K562 (cell line): ENCODE measurements at regions of chr1 and their contacts with region 1.

Region 1: DNA sequence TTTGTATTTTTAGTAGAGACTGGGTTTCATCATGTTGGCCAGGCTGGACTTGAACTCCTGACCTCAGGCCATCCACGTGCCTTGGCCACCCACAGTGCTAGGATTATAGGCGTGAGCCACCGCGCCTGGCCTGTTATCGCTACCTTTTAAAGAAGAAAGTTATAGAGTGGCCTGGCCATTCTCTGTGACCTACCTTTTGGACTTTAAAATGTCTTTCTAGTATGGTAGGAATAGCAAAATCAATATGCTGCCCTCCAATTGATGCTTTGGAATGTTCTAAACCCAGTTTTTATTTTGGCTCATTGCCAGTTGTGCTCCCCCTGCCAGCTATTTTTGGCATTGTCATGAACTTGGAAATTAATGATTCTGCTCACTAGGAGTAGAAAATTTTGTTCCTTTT is 19.9 kb downstream of the HIPK1 start:
- DNase-seq: peak; percentile 63 to 78 (median 66)
- ATAC-seq: peak; percentile 65
- H3K4me3 ChIP-seq: no peak overlapping the region
- H3K27ac ChIP-seq: peak overlapping the region; percentile 44; the same call in 2 of the 3 replicates
- H3K4me1 ChIP-seq: peaks cover 11 to 27% of the 10 kb centered on the region in 2 experiments; a peak in 4 of 5 replicates
- H3K27me3 ChIP-seq: no peaks in the 10 kb centered on the region
- CTCF ChIP-seq: peak; percentile 57 to 72 (median 66); a peak in 5 of 6 replicates
- EP300 ChIP-seq: no peak
- POLR2A ChIP-seq: no peak
- RAD21 ChIP-seq: peak; percentile 36 to 75; a peak in 3 of 4 replicates

Region 2: DNA sequence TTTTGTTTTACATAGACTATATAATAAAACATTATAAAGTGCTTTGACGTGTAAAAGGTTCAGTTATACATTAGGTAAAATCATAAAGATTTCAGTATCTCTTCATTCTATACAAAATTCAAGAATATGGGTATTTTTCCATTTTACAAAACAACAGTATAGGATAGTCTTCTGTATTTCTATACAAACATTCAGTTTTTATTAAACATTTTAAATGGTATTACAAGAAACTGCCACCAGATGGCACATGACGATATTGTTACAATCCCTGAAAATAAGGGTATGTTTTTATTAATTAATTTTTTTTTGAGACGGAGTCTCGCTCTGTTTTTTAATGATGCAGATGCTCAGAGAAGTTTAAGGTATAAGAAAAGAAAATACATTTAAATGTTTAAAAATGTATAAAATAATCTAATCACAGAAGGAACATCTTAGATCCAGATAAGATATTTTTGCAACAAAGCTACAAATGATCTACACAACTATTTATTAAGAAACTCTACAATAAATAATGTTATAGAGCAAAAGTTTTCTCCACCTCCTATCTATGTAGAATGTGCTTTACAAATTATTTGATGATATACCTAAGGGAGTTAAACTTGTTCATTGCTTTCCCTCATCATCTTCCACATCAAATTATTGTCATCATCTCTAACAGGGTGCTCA is 113.2 kb before region 1 on chr1:
- CTCF ChIA-PET with region 1: interaction called, 5 read pairs
- POLR2A ChIA-PET with region 1: no interaction called
- in situ Hi-C with region 1: no loop called
- intact Hi-C with region 1: loop called (anchors 5 kb)
- DNase-seq: peak; percentile 33 to 71 (median 38)
- ATAC-seq: peak; percentile 70
- H3K4me3 ChIP-seq: no peak overlapping the region
- H3K27ac ChIP-seq: no peak overlapping the region
- H3K4me1 ChIP-seq: no peaks in the 10 kb centered on the region
- H3K27me3 ChIP-seq: no peaks in the 10 kb centered on the region
- CTCF ChIP-seq: peak in 2 of 3 experiments; percentile 52 to 83; a peak in 4 of 6 replicates
- EP300 ChIP-seq: no peak
- POLR2A ChIP-seq: no peak
- RAD21 ChIP-seq: peak; percentile 88 to 89

Region 3: DNA sequence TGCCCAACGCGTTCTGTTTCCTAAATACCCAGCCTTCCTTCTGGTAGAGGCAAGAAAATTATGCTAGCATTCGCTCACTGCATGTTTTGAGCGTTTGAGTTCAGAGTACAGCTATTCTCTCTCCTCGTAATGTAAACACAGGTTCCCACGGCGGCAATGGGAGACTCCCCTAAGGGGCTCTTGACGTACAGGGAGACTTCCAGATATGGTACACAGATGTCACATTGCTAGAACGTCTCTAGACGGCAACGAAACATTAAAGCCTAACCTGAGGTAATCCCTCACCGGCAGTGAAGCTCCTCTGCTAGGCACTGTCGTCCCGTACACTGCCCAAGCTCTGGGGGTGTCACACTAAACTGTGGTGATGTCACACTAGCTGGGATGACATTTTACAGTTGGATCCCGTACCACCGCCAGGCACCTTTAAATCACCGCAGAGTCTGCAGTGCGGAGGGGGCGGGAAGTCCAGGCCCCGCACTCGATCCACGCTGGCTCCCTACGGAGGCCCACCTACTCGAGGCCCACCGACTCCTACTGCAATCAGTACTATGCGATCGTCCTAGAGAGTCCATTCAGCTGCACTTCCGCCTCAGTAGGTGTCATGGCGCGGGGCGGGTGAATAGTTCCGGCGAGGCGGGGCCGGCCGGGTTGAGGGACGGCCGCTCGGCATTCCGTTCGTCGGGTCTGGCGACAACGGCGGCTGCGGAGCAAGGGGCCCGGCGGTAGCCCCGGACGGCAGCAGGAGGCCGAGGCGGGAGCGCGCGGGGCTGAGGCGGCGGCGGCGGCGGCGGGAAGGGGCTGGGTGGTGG is 19.9 kb before region 1 on chr1 and contains the start of gene HIPK1:
- CTCF ChIA-PET with region 1: no interaction called
- POLR2A ChIA-PET with region 1: interaction called, 65 read pairs
- in situ Hi-C with region 1: no loop called
- intact Hi-C with region 1: loop called (anchors 1 kb)
- DNase-seq: peak; percentile 92 to 97 (median 93)
- ATAC-seq: peak; percentile 76
- H3K4me3 ChIP-seq: peak within 1 kb of the TSS; percentile 70
- H3K27ac ChIP-seq: peak within 1 kb of the TSS; percentile 96
- H3K4me1 ChIP-seq: peaks cover 15 to 34% of the 10 kb centered on the region in 2 experiments
- H3K27me3 ChIP-seq: no peaks in the 10 kb centered on the region
- CTCF ChIP-seq: no peak
- EP300 ChIP-seq: no peak; the same call in 1 of the 2 replicates
- POLR2A ChIP-seq: peak; percentile 85
- RAD21 ChIP-seq: peak; percentile 3 to 10; a peak in 1 of 4 replicates
- polyA plus RNA-seq, gene HIPK1: 10.0 to 10.9 TPM

Region 4: GRCh38 chr1:113934511-113935055 is 14.4 kb before region 1 on chr1:
- CTCF ChIA-PET with region 1: no interaction called
- POLR2A ChIA-PET with region 1: interaction called, 65 read pairs
- in situ Hi-C with region 1: no loop called
- intact Hi-C with region 1: loop called (anchors 1 kb)
- DNase-seq: no peak
- ATAC-seq: no peak
- H3K4me3 ChIP-seq: no peak overlapping the region
- H3K27ac ChIP-seq: no peak overlapping the region
- H3K4me1 ChIP-seq: peaks cover 25 to 38% of the 10 kb centered on the region in 2 experiments
- H3K27me3 ChIP-seq: no peaks in the 10 kb centered on the region
- CTCF ChIP-seq: no peak
- EP300 ChIP-seq: no peak
- POLR2A ChIP-seq: no peak
- RAD21 ChIP-seq: no peak

Region 5: DNA sequence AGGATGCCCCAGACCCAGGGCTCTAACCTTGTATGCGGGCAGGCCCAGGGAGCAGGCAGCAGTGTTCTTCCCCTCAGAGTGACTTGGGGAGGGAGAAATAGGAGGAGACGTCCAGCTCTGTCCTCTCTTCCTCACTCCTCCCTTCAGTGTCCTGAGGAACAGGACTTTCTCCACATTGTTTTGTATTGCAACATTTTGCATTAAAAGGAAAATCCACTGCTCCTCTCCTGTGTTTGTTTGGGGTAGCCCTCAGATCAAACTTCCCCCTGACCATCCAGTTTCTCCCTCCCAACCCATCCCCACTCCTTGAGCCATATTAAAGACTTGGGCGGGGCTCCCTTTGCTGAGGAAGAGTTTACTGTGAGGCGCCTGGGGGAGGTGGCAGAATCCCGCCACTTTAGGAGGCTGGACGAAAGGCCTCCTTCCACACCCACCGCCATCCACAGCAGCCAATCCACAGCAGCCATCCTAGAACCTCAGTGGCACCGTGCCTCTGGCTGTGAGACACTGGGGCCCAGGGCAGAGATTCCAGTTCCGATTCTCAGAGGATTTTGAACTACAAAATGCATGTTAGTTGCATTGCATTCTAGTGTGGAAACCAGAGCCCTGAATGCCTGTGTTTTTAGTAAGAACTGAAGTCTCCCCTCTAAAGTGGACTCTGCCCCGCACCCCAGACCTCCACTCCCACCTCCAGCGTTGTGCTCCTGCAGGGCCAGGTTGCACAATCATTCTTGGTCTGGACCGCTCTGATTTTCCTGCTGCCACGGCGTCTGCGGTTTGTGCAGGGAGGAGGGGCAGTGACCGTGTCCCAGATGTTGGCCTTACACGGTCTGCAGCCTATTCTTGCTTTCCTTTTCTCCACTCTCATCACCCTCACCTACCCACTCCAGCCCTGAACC is 33.3 kb after region 1 on chr1:
- CTCF ChIA-PET with region 1: no interaction called
- POLR2A ChIA-PET with region 1: no interaction called
- in situ Hi-C with region 1: no loop called
- intact Hi-C with region 1: no loop called
- DNase-seq: peak in 1 of 4 experiments; percentile 28
- ATAC-seq: peak; percentile 12; the same call in 1 of the 3 replicates
- H3K4me3 ChIP-seq: no peak overlapping the region
- H3K27ac ChIP-seq: no peak overlapping the region
- H3K4me1 ChIP-seq: peaks cover 5 to 8% of the 10 kb centered on the region in 2 experiments; a peak in 2 of 5 replicates
- H3K27me3 ChIP-seq: peaks cover 23 to 66% of the 10 kb centered on the region in 2 experiments; a peak in 4 of 5 replicates
- CTCF ChIP-seq: no peak
- EP300 ChIP-seq: no peak
- POLR2A ChIP-seq: no peak
- RAD21 ChIP-seq: no peak